Breast epithelium (tissue), 4 donors: ENCODE measurements at regions of chr16 and their contacts with region 1.

Region 1: GRCh38 chr16:60776281-60776680 is 1260.0 kb downstream of the CDH8 start:
- DNase-seq: no peak
- H3K4me3 ChIP-seq: no peak overlapping the region
- H3K27ac ChIP-seq: no peak overlapping the region
- H3K4me1 ChIP-seq: no peaks in the 10 kb centered on the region
- H3K27me3 ChIP-seq: no peaks in the 10 kb centered on the region
- CTCF ChIP-seq: no peak
- POLR2A ChIP-seq: no peak

Region 2: GRCh38 chr16:61617384-61617783 is 841.1 kb after region 1 on chr16:
- intact Hi-C with region 1: no loop called
- DNase-seq: no peak
- H3K4me3 ChIP-seq: no peak overlapping the region
- H3K27ac ChIP-seq: no peak overlapping the region
- H3K4me1 ChIP-seq: no peaks in the 10 kb centered on the region
- H3K27me3 ChIP-seq: no peaks in the 10 kb centered on the region
- CTCF ChIP-seq: no peak
- POLR2A ChIP-seq: no peak

Region 3: DNA sequence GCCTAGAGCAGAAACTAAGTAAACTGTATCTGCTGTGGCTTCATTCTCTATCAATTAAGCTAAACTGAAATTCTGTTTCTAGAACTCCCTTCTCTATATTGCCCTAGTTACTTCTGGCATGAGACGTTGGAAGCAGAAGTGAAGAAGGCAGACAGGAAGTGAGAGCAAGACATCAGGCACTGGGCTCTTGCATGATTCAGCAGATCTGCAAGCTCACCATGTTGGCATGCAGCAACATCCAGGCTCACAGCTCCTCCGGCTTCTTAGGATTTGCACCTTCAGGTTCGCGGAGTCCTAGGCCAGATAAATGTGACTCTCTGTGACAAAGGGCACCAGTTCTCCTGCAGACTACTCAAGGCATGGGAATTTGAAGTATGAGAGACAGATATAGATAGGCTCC is 1111.6 kb after region 1 on chr16:
- intact Hi-C with region 1: loop called (anchors 5 kb)
- DNase-seq: no peak
- H3K4me3 ChIP-seq: no peak overlapping the region
- H3K27ac ChIP-seq: no peak overlapping the region
- H3K4me1 ChIP-seq: no peaks in the 10 kb centered on the region
- H3K27me3 ChIP-seq: no peaks in the 10 kb centered on the region
- CTCF ChIP-seq: no peak
- POLR2A ChIP-seq: no peak